Right ventricle myocardium inferior (tissue), 1 donor: ENCODE measurements at regions of chr10 and their contacts with region 1.

Region 1: GRCh38 chr10:43689955-43690771 is 41.5 kb upstream of the ZNF32 start:
- DNase-seq: peak; percentile 92
- ATAC-seq: peak; percentile 98

Region 2: DNA sequence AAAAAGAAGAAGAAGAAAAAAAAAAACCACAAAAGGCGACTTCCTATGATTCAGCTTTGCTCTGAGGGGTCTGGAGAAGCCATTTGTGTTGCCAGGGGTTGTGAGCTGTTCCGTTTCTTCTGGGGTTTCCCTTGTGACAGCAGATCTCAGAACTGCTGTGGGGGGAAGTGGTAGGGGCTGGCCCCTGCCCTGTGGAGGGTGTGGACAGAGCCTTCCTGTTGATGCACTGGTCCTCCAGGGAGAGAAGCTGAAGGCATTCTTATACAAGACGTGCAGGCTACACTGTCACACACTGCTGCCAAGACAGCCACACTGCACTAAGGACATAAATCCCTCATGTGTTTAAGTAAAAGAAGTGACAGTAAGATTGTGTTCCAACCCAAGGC is 569.2 kb before region 1 on chr10:
- intact Hi-C with region 1: no loop called
- DNase-seq: no peak
- ATAC-seq: peak; percentile 56

Region 3: DNA sequence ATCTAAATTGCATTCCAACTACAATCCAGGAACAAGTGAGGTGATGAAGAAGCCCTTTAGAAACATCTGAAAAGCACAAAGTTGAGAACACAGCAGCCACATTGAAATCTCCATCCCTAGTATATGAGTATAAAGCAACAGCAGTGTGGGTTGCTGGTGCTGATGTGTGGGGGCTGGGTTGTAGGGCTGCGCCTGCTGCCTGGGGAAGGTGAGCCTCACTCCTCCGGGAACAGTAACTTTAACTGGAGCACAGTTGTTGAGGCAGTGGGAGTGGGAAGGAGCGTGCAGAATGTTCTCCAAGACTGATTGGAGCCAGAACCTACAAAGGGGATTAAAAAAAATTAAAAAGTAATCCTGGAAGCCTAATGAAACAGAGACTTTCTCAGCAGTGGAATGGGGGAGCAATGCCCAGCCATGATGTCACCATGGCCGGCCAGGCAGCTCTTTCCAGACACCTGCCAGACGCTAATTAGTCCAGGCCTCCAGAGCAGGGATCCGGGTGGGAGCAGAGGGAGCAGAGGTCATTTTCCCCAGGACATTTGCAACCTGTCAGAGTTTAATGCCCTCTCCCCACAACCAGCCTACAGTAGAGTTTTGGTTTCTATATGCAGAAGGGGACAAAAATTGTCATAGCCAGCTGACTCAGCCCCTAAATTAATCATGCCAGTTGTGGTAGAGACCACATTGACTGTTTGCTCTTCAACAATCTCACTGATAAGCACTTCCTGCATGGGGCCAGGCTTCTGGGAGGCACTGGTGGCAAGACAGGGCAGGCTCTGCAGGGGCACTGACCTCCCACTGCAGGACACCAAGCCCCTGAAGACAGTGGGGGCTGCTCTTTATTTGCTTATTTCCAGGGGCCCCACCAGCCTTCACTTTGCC is 91.6 kb after region 1 on chr10:
- intact Hi-C with region 1: loop called (anchors 5 kb)
- DNase-seq: no peak
- ATAC-seq: no peak

Region 4: DNA sequence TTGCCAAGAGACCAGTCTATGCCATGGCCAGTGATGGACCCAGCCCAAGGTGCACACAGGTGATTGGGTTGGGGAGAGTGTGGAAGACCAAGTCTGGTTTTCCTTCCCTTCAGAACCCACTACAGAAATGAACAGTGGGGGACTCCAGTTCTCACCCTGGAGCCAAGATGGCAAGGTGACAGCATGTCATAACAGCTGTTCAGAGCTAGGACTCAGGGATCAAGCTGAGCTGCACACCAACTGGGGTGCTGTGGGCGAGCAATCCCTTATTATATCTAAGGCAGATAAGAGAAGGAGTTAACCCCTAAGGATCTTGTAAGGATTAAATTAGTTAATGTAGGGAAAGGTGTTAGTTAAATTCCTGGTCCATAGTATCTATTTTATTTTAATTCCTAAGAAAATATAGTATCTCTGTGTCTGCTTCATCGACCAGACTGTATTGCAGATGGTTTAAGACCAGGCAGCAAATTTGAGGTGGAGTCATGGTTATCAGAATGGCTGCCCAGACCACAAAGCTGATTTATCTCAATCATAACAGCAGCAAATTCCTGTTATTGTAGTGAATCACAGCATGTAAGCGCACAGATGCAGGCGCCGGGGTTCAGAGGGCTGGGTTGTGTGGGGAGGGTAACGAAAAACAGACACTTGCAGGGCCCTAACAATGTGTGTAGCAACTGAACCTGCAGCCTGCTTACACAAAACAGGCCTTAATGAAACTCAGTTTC is 167.2 kb after region 1 on chr10:
- intact Hi-C with region 1: loop called (anchors 5 kb)
- DNase-seq: peak; percentile 57
- ATAC-seq: no peak

Region 5: DNA sequence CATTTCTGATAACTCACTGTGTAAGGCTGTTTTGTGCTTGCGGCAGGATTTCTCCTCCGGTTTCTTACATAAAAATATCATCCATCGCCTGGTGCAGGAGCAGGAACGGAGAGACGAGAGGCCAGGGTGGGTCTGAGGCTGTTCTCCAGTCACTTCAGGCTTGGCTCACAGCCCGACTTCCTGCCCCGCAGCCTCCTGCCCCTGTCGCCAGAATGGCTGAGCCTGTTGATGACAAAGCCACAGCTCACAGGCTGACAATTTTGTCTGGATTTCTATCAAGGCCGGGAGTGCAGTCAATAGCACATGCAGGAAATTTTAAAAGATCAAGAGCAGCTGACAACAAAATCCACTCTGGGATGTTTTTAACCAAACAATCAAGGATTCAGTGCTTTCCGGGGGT is 188.2 kb after region 1 on chr10:
- intact Hi-C with region 1: no loop called
- DNase-seq: peak; percentile 62
- ATAC-seq: peak; percentile 41

Region 6: GRCh38 chr10:43905512-43906236 is 215.5 kb after region 1 on chr10:
- intact Hi-C with region 1: loop called (anchors 2 kb)
- DNase-seq: peak; percentile 82
- ATAC-seq: peak; percentile 77

Region 7: GRCh38 chr10:44044549-44044948 is 354.4 kb after region 1 on chr10:
- intact Hi-C with region 1: loop called (anchors 5 kb)
- DNase-seq: no peak
- ATAC-seq: peak; percentile 44

Region 8: DNA sequence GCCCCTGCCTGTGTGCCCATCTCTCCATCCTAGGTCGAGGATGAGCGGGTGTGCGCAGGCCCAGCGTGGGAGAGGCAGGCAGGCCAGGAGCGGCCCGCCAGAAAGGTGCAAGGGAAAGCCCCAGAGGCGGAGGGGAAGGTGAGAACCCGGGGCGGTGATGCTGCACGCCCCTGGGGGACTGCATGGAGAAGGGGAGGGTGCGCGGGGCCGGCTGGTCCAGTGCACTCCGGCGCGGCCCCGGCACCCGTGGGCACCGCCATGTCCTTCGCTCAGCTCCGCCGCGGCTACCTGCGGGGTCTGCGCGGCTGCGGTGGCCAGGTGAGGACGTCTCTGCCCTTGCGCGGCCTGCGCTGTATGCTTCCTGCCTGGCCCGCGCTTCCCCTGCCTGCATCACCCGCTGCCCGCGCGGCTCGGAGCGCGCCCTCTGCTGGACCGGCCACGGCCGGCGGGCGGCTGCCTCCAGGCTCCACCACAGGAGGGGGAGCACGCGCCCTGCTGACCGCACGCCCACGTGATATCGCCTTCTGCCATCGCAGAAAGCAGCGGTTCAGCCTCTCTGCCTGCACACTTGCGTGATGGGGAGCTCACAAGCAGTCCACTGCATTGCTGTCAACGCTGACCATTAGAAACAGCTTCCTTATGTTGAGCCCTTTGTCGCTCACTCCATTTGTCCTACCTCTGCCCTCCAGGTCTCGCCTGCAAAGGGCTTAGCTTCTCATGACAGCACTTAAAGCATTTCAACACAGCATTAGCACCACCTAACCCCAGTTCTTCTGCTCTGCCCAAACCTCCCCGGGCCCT is 620.8 kb after region 1 on chr10:
- intact Hi-C with region 1: loop called (anchors 1 kb)
- DNase-seq: peak; percentile 91
- ATAC-seq: peak; percentile 98